ENCODE measurements at regions of chr13 and their contacts with region 1.

Region 1: GRCh38 chr13:55245005-55245644 is 1895.6 kb upstream of the PRR20A start:
- DNase-seq: peak in 1 of 2 experiments; percentile 52
- H3K4me3 ChIP-seq: no peak overlapping the region
- H3K4me3 Mint-ChIP-seq: no peak overlapping the region
- H3K27ac Mint-ChIP-seq: no peak overlapping the region
- H3K4me1 ChIP-seq: no peaks in the 10 kb centered on the region
- H3K4me1 Mint-ChIP-seq: no peaks in the 10 kb centered on the region
- H3K27me3 ChIP-seq: no peaks in the 10 kb centered on the region
- H3K27me3 Mint-ChIP-seq: peaks cover 10% of the 10 kb centered on the region
- CTCF ChIP-seq: peak; percentile 61 to 71

Region 2: DNA sequence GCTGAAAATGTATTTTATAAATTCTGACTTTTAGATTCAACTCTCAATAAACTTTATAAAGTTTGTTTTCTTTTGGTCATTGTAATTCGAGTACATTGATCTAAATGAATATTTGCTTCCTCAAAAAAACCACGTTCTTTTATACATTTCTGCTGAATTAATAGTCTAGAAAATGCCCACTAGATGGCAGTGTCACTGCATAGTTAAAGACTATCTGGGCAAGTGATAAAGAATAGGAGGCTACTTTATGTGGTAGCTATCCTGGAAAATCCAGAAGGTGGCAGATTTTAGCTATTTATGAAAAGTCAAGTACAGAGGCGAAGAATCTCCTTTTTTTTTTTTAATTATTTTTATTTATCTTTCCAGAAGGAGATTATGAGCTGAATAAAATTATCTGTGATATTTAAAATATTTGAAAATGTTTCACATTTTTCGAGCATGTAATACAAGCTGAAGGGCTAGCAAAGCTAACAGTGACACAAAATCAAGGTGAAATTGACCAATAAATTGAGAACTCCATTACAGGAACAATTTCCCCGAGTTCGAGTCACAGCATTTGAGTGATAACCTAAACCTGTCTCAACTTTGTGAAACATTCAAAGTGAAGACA is 1994.8 kb before region 1 on chr13:
- CTCF ChIA-PET with region 1: no interaction called
- POLR2A ChIA-PET with region 1: no interaction called
- intact Hi-C with region 1: loop called (anchors 10 kb)
- DNase-seq: peak in 1 of 2 experiments; percentile 72
- H3K4me3 ChIP-seq: no peak overlapping the region
- H3K4me3 Mint-ChIP-seq: no peak overlapping the region
- H3K27ac Mint-ChIP-seq: no peak overlapping the region
- H3K4me1 ChIP-seq: no peaks in the 10 kb centered on the region
- H3K4me1 Mint-ChIP-seq: no peaks in the 10 kb centered on the region
- H3K27me3 ChIP-seq: no peaks in the 10 kb centered on the region
- H3K27me3 Mint-ChIP-seq: peaks cover 15% of the 10 kb centered on the region
- CTCF ChIP-seq: peak; percentile 68 to 77

Region 3: GRCh38 chr13:54185785-54186184 is 1059.3 kb before region 1 on chr13:
- CTCF ChIA-PET with region 1: no interaction called
- POLR2A ChIA-PET with region 1: no interaction called
- intact Hi-C with region 1: loop called (anchors 2 kb)
- DNase-seq: peak in 1 of 2 experiments; percentile 2
- H3K4me3 ChIP-seq: no peak overlapping the region
- H3K4me3 Mint-ChIP-seq: no peak overlapping the region
- H3K27ac Mint-ChIP-seq: no peak overlapping the region
- H3K4me1 ChIP-seq: no peaks in the 10 kb centered on the region
- H3K4me1 Mint-ChIP-seq: no peaks in the 10 kb centered on the region
- H3K27me3 ChIP-seq: no peaks in the 10 kb centered on the region
- H3K27me3 Mint-ChIP-seq: peaks cover 12% of the 10 kb centered on the region
- CTCF ChIP-seq: peak; percentile 11 to 24

Region 4: DNA sequence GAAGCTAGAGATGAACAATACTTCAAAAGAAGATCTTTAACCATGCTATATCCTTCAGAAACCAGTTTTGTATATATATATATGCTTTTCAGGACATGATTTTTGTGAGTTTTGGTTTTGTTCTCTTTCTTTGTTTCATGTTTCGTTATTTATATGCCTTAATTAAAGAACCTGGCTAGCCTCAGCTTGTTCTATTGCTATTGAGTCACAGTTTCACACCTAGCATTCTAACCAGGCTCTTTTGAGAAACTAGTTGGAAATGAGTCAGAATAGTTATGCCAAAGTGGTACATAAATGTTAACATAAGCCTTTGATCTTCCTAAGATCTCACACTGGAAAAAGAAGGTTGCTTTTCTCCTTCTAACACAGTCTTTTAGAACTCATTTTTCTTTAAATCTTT is 291.3 kb before region 1 on chr13:
- CTCF ChIA-PET with region 1: no interaction called
- POLR2A ChIA-PET with region 1: no interaction called
- intact Hi-C with region 1: loop called (anchors 10 kb)
- DNase-seq: no peak
- H3K4me3 ChIP-seq: no peak overlapping the region
- H3K4me3 Mint-ChIP-seq: no peak overlapping the region
- H3K27ac Mint-ChIP-seq: no peak overlapping the region
- H3K4me1 ChIP-seq: no peaks in the 10 kb centered on the region
- H3K4me1 Mint-ChIP-seq: no peaks in the 10 kb centered on the region
- H3K27me3 ChIP-seq: no peaks in the 10 kb centered on the region
- H3K27me3 Mint-ChIP-seq: no peaks in the 10 kb centered on the region
- CTCF ChIP-seq: no peak

Region 5: DNA sequence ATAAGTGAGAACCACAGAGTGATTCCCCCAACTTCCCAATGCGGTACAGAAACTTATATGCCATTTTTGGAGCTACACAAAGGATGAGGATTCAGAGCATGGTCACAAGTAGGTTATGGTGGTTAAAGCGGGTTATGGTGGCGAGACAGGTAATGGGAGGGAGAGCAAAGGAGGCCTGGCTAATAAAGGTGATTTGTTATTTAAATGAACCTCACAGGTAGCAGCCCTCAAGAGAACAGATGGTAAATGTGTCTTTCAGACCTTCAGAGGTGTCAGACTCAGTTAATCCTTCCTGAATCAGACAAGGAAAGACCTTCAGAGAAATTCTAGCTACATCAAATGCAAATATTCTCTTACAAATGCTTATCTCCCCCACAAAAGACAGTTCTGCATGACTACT is 245.1 kb before region 1 on chr13:
- CTCF ChIA-PET with region 1: no interaction called
- POLR2A ChIA-PET with region 1: no interaction called
- intact Hi-C with region 1: no loop called
- DNase-seq: no peak
- H3K4me3 ChIP-seq: no peak overlapping the region
- H3K4me3 Mint-ChIP-seq: no peak overlapping the region
- H3K27ac Mint-ChIP-seq: no peak overlapping the region
- H3K4me1 ChIP-seq: no peaks in the 10 kb centered on the region
- H3K4me1 Mint-ChIP-seq: no peaks in the 10 kb centered on the region
- H3K27me3 ChIP-seq: no peaks in the 10 kb centered on the region
- H3K27me3 Mint-ChIP-seq: peaks cover 4% of the 10 kb centered on the region
- CTCF ChIP-seq: no peak

Region 6: DNA sequence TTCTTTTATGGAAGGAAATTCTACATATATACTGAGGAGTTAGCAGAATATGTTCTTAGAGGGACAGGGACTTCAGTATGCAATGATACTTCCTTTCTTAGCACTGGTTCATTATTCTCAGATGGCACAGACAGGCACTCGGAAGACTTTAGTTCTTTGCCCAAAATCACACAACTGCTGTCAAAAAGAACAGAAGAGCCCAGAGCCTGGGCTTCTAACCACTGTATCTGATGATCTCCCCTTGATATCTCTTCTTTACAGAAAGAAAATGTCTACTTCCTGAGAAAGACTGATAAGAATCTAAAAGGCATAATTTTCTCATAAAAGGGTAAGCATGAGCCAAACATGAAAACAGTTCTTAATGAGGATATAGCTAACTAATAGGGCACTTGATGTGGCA is 138.6 kb before region 1 on chr13:
- CTCF ChIA-PET with region 1: no interaction called
- POLR2A ChIA-PET with region 1: no interaction called
- intact Hi-C with region 1: no loop called
- DNase-seq: no peak
- H3K4me3 ChIP-seq: no peak overlapping the region
- H3K4me3 Mint-ChIP-seq: no peak overlapping the region
- H3K27ac Mint-ChIP-seq: no peak overlapping the region
- H3K4me1 ChIP-seq: no peaks in the 10 kb centered on the region
- H3K4me1 Mint-ChIP-seq: no peaks in the 10 kb centered on the region
- H3K27me3 ChIP-seq: no peaks in the 10 kb centered on the region
- H3K27me3 Mint-ChIP-seq: peaks cover 2% of the 10 kb centered on the region
- CTCF ChIP-seq: no peak

Region 7: GRCh38 chr13:55199134-55199533 is 46.0 kb before region 1 on chr13:
- CTCF ChIA-PET with region 1: interaction called, 8 read pairs
- POLR2A ChIA-PET with region 1: no interaction called
- intact Hi-C with region 1: loop called (anchors 1 kb)
- DNase-seq: peak; percentile 26 to 45
- H3K4me3 ChIP-seq: no peak overlapping the region
- H3K4me3 Mint-ChIP-seq: no peak overlapping the region
- H3K27ac Mint-ChIP-seq: no peak overlapping the region
- H3K4me1 ChIP-seq: no peaks in the 10 kb centered on the region
- H3K4me1 Mint-ChIP-seq: no peaks in the 10 kb centered on the region
- H3K27me3 ChIP-seq: no peaks in the 10 kb centered on the region; the same call in 1 of the 2 replicates
- H3K27me3 Mint-ChIP-seq: no peaks in the 10 kb centered on the region
- CTCF ChIP-seq: peak in 1 of 2 experiments; percentile 53

Measured in Caco-2 (cell line).